Common myeloid progenitor, CD34-positive (primary cell): ENCODE measurements at regions of chr17 and their contacts with region 1.

Region 1: DNA sequence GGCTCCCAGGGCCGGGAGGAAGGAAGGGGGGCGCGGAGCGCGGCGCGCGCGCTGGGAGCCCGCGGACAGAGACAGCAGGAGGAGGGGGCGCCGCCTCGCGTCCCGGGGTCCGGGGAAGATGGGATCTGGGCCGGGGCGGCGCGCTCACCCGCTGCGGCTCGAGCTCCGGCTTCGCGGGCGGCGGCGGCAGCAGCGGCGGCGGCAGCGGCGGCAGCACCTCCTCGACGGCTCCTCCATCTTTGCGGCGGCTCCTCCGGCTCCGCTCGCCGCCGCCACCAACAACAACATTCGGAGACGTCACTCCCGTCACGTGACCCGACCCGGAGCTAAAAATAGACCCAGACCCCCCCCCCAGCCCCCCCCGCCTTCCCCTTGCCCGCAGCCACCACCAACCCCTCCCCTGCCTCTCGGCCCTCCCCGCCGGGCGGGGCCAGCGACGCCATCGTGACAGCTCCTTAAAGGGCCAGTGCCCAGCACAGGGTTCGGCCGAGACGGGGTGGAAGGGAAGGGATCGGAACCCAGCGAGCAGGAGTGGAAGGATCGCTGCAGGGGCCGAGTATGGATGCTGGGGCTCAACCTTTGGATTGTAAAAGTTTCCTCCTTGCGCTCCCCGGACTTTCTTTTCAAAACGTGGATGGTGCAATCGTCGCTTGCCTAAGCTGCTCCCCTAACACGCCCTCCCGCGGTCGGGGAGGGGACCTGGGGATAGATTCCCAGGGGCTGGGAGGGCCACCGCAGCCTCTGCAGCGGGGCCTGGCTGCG is at the start of gene HDAC5:
- DNase-seq: peak; percentile 93 to 97 (median 96)
- H3K4me3 ChIP-seq: peak within 1 kb of the TSS; percentile 83 to 95 (median 92)
- H3K27ac ChIP-seq: peak within 1 kb of the TSS; percentile 46 to 85
- H3K4me1 ChIP-seq: peaks cover 7 to 28% (median 23%) of the 10 kb centered on the region in 4 experiments
- H3K27me3 ChIP-seq: no peaks in the 10 kb centered on the region

Region 2: GRCh38 chr17:44102845-44103622 is 20.5 kb before region 1 on chr17:
- CTCF ChIA-PET with region 1: interaction called, 85 read pairs
- POLR2A ChIA-PET with region 1: interaction called, 3 read pairs
- DNase-seq: no peak
- H3K4me3 ChIP-seq: no peak overlapping the region
- H3K27ac ChIP-seq: no peak overlapping the region
- H3K4me1 ChIP-seq: peaks cover 0 to 30% (median 9%) of the 10 kb centered on the region in 4 experiments
- H3K27me3 ChIP-seq: no peaks in the 10 kb centered on the region

Region 3: DNA sequence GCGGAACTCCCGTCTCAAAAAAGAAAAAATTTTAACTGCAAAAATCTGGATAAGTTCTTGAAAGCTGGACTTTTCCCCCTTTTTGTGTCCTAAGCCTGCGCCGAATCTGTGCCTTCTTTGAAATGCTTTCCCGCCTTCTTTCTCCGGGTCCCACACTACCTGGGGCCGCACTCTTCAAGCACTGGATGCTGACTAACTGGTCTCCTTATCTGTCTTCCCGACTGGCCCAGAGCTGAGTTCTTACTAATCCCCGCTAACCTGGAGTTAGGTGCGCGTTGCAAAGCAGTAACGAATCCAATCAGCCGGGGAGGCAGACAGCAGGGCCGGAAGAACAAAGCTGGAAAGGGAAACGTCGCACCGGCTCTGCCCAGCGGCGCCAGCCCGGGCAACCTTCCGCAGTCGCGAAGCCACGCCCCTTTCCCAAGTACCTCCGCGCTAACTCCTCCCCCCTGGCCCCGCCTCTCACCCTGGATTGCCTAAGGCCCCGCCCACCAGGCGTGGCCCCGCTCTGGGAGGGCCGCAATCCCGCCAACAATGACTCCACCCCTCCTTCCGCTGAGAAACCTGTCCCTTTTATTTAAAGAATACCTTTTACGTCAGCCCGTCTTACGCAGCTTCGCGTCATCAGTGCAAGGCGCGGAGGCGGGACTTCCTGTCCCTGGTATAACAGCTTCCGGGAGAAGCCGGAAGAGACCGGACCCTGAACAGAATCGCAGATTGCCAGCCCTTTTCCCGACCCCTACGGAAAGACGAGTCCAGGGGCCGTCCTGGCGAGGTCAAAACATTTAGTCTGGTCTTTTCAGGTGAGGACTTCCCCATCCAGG is 63.0 kb after region 1 on chr17 and contains the start of gene TMUB2:
- CTCF ChIA-PET with region 1: interaction called, 11 read pairs
- POLR2A ChIA-PET with region 1: interaction called, 4 read pairs
- DNase-seq: peak; percentile 99 to 100 (median 99)
- H3K4me3 ChIP-seq: peak within 1 kb of the TSS; percentile 72 to 100 (median 97)
- H3K27ac ChIP-seq: peak within 1 kb of the TSS; percentile 98 to 99
- H3K4me1 ChIP-seq: peaks cover 5 to 27% (median 18%) of the 10 kb centered on the region in 4 experiments
- H3K27me3 ChIP-seq: no peaks in the 10 kb centered on the region